ENCODE measurements at regions of chr1 and their contacts with region 1.

Region 1: DNA sequence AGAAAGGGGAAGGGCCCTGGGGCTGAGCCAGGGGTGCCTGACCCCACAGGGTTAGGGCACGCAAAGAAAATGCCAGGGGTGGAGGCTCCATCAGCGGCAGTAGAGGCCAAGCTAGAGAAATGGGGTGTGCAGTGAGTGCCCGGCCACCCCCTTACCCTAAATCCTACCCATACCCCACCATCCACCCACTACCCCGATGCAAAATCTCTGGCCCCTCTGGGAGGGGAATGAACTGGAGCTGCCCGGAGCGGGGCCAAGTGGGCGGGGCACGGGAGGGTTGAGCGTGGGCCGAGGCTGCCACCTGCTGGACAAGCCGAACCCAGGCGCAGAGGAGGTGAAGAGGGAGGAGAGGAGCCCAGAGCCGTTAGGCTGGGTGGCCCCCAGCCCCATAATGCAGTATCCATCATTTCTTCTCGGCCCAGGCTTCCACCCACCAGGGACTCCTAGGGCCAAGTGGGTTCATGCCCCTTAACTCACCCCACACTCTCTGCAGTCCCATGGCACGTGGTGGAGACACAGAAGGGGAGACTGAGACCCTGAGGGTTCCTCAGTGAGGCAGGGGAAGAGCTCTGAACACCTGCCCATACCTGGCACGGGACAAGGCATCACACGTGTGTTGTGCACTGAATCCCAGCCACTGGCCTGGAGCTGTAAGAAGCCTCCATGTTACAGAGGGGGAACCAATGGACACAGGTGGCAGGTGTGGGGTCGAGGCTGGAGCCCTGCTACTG is 1.4 kb upstream of the C1QC start:
- DNase-seq: peak; percentile 95
- H3K4me3 ChIP-seq: no peak overlapping the region; a peak in 1 of 4 replicates
- H3K27ac ChIP-seq: no peak overlapping the region
- H3K4me1 ChIP-seq: peaks cover 0 to 11% of the 10 kb centered on the region in 2 experiments; a peak in 1 of 4 replicates
- H3K27me3 ChIP-seq: no peaks in the 10 kb centered on the region
- CTCF ChIP-seq: peak; percentile 84
- EP300 ChIP-seq: no peak
- RAD21 ChIP-seq: peak; percentile 94

Region 2: DNA sequence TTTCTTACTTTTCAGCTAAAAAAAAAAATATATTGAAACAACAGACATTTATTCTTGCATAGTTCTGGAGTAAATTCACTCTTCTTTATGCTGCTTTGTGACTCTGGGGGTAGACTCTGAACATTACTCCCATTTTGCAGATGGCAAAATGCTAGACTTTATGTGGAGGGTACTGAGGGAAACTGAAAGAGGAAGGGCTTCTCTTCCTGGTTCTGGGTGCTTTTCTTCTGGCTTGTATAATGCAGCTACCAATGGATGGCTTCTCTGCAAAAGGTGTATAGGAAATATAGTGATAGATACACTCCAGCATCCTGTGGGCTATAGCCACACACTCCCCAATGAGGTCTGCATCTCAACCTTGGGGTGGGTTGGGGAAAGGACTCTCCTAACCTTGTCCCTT is 210.1 kb before region 1 on chr1:
- CTCF ChIA-PET with region 1: interaction called, 49 read pairs
- POLR2A ChIA-PET with region 1: no interaction called
- DNase-seq: no peak
- H3K4me3 ChIP-seq: no peak overlapping the region
- H3K27ac ChIP-seq: no peak overlapping the region
- H3K4me1 ChIP-seq: no peaks in the 10 kb centered on the region
- H3K27me3 ChIP-seq: 0 out of 2 replicates have a peak, but pooled peaks cover 5% of the 10 kb centered on the region
- CTCF ChIP-seq: no peak
- EP300 ChIP-seq: no peak
- RAD21 ChIP-seq: no peak

Region 3: DNA sequence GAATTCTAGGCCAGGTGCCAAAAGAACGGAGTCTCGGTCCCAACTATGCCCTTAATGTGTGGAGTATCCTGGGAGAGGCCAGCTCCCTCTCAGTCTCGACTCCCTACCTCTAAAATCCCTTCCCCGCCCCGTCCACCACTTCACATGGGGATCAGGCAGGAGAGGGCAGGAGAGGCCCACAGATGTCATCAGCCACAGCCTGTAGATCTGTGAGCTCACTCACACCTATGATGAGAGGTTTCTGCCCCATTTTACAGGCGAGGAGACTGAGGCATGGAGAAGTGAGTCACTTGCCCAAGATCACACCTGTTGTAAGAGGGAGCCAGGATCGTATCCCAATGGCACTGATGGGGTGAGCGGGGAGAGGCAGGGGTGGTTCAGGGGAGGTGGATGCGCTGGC is 99.2 kb before region 1 on chr1:
- CTCF ChIA-PET with region 1: interaction called, 10 read pairs
- POLR2A ChIA-PET with region 1: no interaction called
- DNase-seq: no peak
- H3K4me3 ChIP-seq: no peak overlapping the region
- H3K27ac ChIP-seq: no peak overlapping the region
- H3K4me1 ChIP-seq: no peaks in the 10 kb centered on the region; a peak in 1 of 4 replicates
- H3K27me3 ChIP-seq: 0 out of 2 replicates have a peak, but pooled peaks cover 10% of the 10 kb centered on the region
- CTCF ChIP-seq: no peak
- EP300 ChIP-seq: no peak
- RAD21 ChIP-seq: peak; percentile 35

Region 4: DNA sequence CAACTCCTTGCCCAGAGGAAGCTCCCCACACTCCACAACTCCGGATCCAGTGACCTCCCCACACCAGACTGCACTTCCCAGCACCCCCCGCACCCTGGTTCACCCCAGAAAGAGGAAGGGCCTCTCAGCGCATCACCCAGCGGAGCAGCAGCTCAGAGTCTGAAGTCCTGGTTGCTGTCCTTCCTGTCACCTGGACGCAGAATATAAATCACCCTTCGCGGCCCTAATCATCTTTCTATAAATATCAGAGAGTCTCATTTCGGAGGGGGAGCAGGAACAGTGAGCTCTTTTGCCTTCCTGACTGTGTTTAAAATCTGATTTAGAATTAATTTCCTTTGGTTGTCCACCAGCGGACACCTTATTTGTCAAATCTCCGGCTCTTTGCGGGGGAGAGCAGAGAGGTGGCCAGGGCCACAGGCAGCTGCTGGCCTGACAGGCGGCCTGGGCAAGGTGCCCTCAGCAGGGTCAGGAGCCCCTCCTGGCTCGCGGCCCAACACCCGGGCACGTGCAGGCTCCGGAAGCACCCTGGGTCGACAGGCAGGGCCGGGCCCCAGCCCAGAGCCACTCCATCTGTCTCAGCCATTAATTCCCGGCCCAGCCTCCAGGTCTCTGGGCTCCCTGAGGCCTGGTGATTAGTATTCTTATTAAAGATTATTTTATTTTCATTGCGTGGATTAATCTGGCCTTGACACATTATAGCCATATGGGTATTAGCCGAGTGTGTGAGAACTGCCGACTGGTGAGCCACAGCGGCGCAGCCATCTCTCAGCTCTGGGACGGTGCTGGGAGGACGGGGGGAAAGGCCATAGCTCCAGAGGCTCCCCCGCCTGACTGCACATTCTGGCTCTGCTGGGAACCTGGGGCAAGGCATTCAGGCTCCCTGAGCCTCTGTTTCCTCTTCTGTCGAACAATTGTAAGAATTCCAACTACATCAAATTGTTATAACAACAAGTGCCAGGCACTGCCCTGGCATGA is 59.1 kb before region 1 on chr1:
- CTCF ChIA-PET with region 1: interaction called, 29 read pairs
- POLR2A ChIA-PET with region 1: no interaction called
- DNase-seq: peak; percentile 93
- H3K4me3 ChIP-seq: no peak overlapping the region
- H3K27ac ChIP-seq: peak overlapping the region in 1 of 2 experiments; percentile 91; a peak in 2 of 4 replicates
- H3K4me1 ChIP-seq: peaks cover 0 to 44% of the 10 kb centered on the region in 2 experiments; a peak in 2 of 4 replicates
- H3K27me3 ChIP-seq: no peaks in the 10 kb centered on the region; the same call in 1 of the 2 replicates
- CTCF ChIP-seq: no peak
- EP300 ChIP-seq: peak in 1 of 2 experiments; percentile 77; a peak in 2 of 4 replicates
- RAD21 ChIP-seq: peak; percentile 14; the same call in 1 of the 2 replicates

Region 5: GRCh38 chr1:22619252-22619651 is 22.8 kb before region 1 on chr1:
- CTCF ChIA-PET with region 1: interaction called, 16 read pairs
- POLR2A ChIA-PET with region 1: no interaction called
- DNase-seq: no peak
- H3K4me3 ChIP-seq: no peak overlapping the region
- H3K27ac ChIP-seq: no peak overlapping the region
- H3K4me1 ChIP-seq: peaks cover 0 to 9% of the 10 kb centered on the region in 2 experiments; a peak in 1 of 4 replicates
- H3K27me3 ChIP-seq: peaks cover 19% of the 10 kb centered on the region
- CTCF ChIP-seq: no peak
- EP300 ChIP-seq: no peak
- RAD21 ChIP-seq: no peak

Region 6: GRCh38 chr1:22654692-22655091 is 12.6 kb after region 1 on chr1:
- CTCF ChIA-PET with region 1: interaction called, 22 read pairs
- POLR2A ChIA-PET with region 1: no interaction called
- DNase-seq: no peak
- H3K4me3 ChIP-seq: no peak overlapping the region
- H3K27ac ChIP-seq: no peak overlapping the region
- H3K4me1 ChIP-seq: peaks cover 0 to 10% of the 10 kb centered on the region in 2 experiments; a peak in 1 of 4 replicates
- H3K27me3 ChIP-seq: peaks cover 21% of the 10 kb centered on the region
- CTCF ChIP-seq: no peak; the same call in 1 of the 2 replicates
- EP300 ChIP-seq: no peak
- RAD21 ChIP-seq: no peak

Region 7: DNA sequence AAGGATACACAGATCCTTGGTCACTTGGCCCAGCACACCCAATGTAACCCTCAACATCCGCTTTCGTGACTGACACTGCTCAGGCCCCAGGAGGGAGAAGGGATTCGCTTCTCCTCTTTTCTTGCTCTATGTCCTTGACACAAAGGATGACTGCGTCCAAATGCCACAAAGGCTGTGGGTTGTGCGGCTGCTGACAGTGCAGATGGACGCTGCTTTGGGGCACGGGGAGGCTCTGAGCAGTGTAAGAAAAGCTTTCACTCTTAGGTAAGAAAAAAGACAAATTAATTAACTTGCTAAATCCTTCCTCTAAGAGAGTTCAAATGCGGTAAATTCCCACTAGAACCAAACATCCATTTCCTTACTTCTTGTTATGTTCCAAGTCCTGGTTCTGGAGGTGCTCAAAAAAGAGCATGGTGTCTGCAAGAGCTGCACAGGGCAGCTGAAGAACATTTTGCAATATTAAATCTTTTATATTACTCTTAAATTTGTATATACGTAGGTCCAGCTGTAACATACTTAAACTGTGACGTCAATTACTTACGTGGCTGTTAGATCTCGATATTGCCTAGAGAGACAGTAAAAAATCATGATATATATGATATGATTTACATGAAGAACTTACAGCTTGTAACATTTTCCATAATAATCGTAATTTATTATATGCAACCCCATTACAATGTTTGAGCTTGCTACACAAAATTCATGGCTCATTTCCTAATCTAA is 49.1 kb after region 1 on chr1:
- CTCF ChIA-PET with region 1: no interaction called
- POLR2A ChIA-PET with region 1: no interaction called
- DNase-seq: no peak
- H3K4me3 ChIP-seq: no peak overlapping the region
- H3K27ac ChIP-seq: no peak overlapping the region
- H3K4me1 ChIP-seq: peaks cover 0 to 8% of the 10 kb centered on the region in 2 experiments; a peak in 2 of 4 replicates
- H3K27me3 ChIP-seq: no peaks in the 10 kb centered on the region
- CTCF ChIP-seq: no peak
- EP300 ChIP-seq: no peak
- RAD21 ChIP-seq: no peak

Measured in SK-N-SH (cell line).